ENCODE measurements at regions of chr7 and their contacts with region 1.

Region 1: GRCh38 chr7:90262438-90262837 is 17.5 kb downstream of the CFAP69 start:
- DNase-seq: no peak
- H3K4me3 ChIP-seq: no peak overlapping the region
- H3K27ac ChIP-seq: no peak overlapping the region
- H3K4me1 ChIP-seq: peaks cover 0 to 3% of the 10 kb centered on the region in 2 donors
- H3K27me3 ChIP-seq: no peaks in the 10 kb centered on the region
- CTCF ChIP-seq: peak; percentile 31 to 53 (median 52)

Region 2: DNA sequence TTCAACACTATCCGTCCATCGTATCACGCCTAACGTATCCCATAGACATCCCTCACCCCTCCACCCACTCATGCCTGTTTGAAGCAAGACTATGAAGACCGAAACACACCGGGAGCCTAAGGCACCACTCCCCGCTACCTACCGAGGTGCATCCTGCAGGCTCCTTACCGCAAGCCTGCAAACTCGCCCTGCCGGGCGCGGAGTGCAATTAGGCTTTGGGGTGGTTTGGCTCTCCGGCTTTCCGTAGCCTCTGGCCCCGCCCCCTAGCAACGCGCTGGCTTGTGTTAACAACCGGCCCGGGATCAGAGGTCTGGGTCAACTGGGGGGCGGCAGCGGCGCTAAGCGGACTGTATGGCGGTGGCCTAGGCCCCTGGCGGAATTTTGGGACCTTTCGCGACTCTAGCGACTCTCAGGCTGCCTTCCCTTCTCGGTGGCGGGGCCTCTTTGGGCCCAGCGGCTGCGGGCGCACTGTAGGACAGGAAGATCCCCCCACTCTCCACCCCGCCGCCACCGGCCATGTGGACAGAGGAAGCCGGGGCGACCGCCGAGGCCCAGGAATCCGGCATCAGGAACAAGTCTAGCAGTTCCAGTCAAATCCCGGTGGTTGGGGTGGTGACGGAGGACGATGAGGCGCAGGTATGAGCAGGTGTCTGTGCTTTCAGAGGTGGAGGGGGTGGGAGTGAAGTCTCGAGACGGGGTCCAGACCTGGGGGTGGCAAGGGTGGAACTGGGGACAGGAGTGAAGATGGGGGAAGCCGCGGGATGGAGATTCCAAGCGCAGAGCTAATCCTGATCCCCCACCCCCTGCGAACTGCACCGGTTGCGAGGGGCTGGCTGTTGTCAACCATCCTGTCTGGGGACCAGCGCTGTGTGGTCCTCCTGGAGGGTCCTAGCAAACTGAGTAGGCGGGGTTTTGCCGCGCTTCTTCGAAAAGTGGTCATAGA is 17.3 kb before region 1 on chr7 and contains the start of gene CFAP69:
- intact Hi-C with region 1: loop called (anchors 2 kb)
- DNase-seq: peak; percentile 37 to 96
- H3K4me3 ChIP-seq: peak within 1 kb of the TSS; percentile 88 to 90
- H3K27ac ChIP-seq: peak within 1 kb of the TSS in 1 of 2 donors; percentile 48
- H3K4me1 ChIP-seq: peaks cover 3 to 8% of the 10 kb centered on the region in 2 donors
- H3K27me3 ChIP-seq: no peaks in the 10 kb centered on the region
- CTCF ChIP-seq: peak in 2 of 3 experiments; percentile 20 to 28
- total RNA-seq, gene CFAP69: 0.85 TPM

Region 3: GRCh38 chr7:90403174-90404113 is 141.0 kb after region 1 on chr7 and contains the start of gene CLDN12:
- intact Hi-C with region 1: loop called (anchors 10 kb)
- DNase-seq: peak; percentile 61 to 91
- H3K4me3 ChIP-seq: peak within 1 kb of the TSS; percentile 63 to 69
- H3K27ac ChIP-seq: peak within 1 kb of the TSS; percentile 84 to 88
- H3K4me1 ChIP-seq: no peaks in the 10 kb centered on the region
- H3K27me3 ChIP-seq: no peaks in the 10 kb centered on the region
- CTCF ChIP-seq: no peak
- total RNA-seq, gene CLDN12: 55.3 TPM

Region 4: DNA sequence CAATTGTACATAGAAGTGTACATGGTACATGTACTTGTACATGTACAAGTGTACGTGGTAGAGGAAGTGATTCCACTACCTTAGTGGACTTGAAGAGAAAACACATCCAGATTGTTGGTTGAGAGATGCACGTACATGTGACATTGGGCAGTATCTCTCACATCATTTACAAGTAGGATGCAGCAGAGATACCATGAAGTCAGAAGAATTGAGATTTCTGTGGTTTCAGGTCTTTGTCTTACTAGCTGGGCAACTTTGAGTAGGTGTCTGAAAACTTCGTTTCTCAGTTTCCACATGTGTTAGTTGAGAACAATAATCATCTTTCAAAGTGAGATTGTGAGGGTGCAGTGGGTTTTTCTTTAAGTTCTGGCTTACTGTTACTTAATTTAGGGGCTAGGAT is 162.3 kb after region 1 on chr7:
- intact Hi-C with region 1: loop called (anchors 5 kb)
- DNase-seq: no peak
- H3K4me3 ChIP-seq: no peak overlapping the region
- H3K27ac ChIP-seq: no peak overlapping the region
- H3K4me1 ChIP-seq: no peaks in the 10 kb centered on the region
- H3K27me3 ChIP-seq: no peaks in the 10 kb centered on the region
- CTCF ChIP-seq: no peak